GM13977 (cell line): ENCODE measurements at regions of chr3 and their contacts with region 1.

Region 1: DNA sequence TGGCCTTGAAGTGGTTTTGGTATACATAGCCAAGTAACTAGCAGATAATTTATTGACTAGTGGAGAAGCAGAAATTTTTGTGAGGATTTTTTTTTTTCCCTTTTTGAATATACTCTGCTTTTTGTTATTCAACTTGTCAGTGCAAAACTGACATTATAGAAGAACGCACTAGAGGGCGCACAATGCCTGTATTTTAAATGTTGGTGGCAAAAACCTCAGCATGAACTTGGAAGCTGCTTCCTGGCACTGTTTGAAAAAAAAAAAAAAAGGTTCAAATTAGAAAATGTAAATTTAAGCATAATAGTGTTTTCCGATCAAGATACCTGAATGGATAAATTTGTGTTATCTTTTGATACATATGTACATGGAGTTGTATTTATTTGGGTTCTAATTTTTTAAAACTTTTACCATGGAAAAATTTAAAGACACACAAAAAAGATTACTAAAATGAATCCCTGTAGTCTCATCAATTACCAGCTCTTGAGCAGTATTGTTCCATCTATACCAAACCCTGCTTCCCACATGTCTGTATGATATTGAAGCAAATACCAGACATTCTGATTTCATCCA is 56.0 kb downstream of the SLC25A26 start:
- DNase-seq: peak; percentile 44
- CTCF ChIP-seq: peak; percentile 72

Region 2: DNA sequence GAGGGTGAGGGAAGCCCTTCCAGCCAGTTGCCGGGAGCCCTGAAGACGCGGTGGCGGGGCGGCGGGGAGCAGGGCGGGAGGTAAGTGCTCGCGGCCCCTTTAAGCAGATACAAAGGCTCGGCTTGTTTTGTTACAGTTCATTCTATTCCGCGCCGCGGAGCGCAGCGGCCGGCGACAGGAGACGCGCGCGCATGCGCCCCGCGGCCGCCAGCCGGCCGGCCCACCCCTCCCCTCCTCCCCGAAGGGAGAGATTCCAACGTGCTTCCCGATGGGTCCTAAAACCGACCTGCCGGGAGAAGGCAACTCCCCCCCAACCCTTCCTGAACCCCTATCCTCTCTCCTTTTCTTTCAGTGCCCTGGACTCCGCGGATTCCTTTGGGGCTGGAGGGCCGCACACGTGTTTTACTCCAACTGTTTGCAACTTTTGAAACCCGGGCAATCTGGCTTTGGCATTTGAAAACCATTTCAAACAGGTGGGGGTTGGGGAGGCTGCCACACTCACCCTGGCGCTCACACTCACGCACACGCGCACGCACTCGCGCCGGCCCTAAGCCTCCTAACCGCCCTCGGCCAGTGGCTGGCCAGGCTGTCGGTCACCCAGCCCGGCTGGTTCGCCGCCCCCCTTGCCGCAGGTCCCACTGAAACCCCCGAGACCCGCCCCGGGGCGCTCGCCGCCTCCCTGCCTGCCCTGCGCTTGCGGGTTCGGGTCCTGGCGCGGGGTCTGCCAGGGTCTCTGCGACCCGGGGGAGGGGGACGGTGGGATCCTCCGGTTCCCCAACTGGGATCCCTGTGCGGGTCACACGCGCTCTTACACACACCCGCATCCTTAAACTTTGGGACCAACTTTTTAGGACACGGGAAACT is 237.8 kb before region 1 on chr3 and contains the start of gene MAGI1:
- in situ Hi-C with region 1: no loop called
- DNase-seq: peak; percentile 89
- CTCF ChIP-seq: no peak

Region 3: GRCh38 chr3:66378256-66378823 is 101.5 kb after region 1 on chr3:
- in situ Hi-C with region 1: loop called (anchors 25 kb)
- DNase-seq: no peak
- CTCF ChIP-seq: peak; percentile 54

Region 4: DNA sequence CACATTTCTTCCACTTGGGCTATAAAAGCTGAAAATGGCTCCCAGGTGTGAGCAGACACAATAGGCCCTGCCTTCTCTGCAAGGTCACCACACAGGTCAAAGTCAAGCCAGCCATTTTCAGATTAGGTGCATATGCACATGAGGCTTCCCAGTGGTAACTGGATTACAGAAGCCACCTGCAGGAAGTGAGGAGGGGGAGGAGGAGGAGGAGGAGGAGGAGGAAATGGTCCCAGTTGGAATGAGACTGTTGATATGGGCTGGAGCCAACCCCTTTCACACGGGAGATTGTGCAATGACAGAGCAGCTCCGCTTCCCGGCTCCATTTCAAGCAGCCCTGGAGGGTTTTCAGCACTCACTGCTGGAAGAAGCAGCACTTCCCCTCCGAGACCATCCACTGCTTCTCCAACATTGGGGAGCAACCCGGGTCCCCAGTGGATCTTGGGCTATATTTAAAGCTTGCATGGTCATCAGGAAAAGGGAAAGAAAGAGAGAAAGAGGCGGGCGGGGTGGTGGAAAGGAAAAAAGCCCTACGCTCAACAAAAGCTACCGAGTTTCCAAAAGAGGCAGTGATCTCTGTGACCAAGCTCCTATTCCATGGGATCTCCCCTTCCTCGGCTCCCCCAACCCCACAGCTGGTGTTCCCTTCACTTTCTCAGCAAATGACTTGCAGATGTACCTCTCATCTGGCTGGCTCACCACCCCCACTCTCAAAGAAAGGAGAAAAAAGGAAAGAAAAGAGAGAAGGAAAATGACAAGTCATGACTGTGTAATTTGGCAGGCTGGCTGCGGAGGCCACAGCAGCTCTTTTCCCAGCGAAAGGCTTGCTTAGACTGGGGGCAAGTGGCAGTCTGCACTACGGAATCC is 165.7 kb after region 1 on chr3:
- in situ Hi-C with region 1: no loop called
- DNase-seq: no peak
- CTCF ChIP-seq: no peak

Region 5: GRCh38 chr3:66816090-66816761 is 539.4 kb after region 1 on chr3:
- in situ Hi-C with region 1: loop called (anchors 5 kb)
- DNase-seq: peak; percentile 36
- CTCF ChIP-seq: peak; percentile 27